Activated CD4-positive, alpha-beta T cell treated with anti-CD3 and anti-CD28 coated beads, Interleukin-2, amount 10 ng/mL, durations not matched to agents 24 days and 14 days (primary cell): ENCODE measurements at regions of chr7 and their contacts with region 1.

Region 1: DNA sequence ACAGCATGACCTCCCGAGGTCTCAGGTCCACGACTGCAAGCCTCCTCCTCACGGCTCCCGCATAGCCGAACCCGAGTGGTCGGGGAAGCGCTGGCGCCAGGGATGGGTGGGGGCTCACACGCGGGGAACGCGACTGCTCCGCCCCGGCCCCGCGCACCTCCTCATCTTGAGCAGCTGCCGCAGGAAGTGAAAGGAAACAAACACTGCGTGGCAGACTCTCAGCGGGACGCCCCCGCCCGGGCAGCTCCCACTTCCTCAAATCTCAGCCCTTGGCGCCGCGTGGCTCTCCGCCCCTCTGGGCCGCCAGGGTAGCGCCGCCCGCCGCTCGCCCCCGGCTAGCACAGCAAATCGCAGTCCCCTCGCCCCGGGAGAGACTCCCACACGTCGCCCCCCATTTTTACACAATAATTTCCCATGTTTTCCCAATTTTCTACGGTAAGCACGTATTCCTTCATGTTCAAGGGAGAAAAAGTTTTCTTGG is at the start of gene TMEM243:
- DNase-seq: peak; percentile 95
- H3K4me3 Mint-ChIP-seq: peak within 1 kb of the TSS; percentile 99
- H3K27ac Mint-ChIP-seq: peak within 1 kb of the TSS; percentile 99
- H3K4me1 Mint-ChIP-seq: peaks cover 33% of the 10 kb centered on the region
- H3K27me3 Mint-ChIP-seq: peaks cover 11% of the 10 kb centered on the region
- total RNA-seq, gene TMEM243: 46.1 and 48.0 TPM in 2 replicates

Region 2: GRCh38 chr7:85471740-85472139 is 1747.8 kb before region 1 on chr7:
- intact Hi-C with region 1: loop called (anchors 5 kb)
- DNase-seq: peak; percentile 58
- H3K4me3 Mint-ChIP-seq: peak overlapping the region; percentile 25
- H3K27ac Mint-ChIP-seq: peak overlapping the region; percentile 68
- H3K4me1 Mint-ChIP-seq: peaks cover 13% of the 10 kb centered on the region
- H3K27me3 Mint-ChIP-seq: no peaks in the 10 kb centered on the region

Region 3: GRCh38 chr7:87152107-87152844 is 67.3 kb before region 1 on chr7 and contains the start of gene DMTF1:
- intact Hi-C with region 1: loop called (anchors 1 kb)
- DNase-seq: peak; percentile 96
- H3K4me3 Mint-ChIP-seq: peak within 1 kb of the TSS; percentile 88
- H3K27ac Mint-ChIP-seq: peak within 1 kb of the TSS; percentile 95
- H3K4me1 Mint-ChIP-seq: peaks cover 27% of the 10 kb centered on the region
- H3K27me3 Mint-ChIP-seq: no peaks in the 10 kb centered on the region
- total RNA-seq, gene DMTF1: 95.7 and 102 TPM in 2 replicates

Region 4: DNA sequence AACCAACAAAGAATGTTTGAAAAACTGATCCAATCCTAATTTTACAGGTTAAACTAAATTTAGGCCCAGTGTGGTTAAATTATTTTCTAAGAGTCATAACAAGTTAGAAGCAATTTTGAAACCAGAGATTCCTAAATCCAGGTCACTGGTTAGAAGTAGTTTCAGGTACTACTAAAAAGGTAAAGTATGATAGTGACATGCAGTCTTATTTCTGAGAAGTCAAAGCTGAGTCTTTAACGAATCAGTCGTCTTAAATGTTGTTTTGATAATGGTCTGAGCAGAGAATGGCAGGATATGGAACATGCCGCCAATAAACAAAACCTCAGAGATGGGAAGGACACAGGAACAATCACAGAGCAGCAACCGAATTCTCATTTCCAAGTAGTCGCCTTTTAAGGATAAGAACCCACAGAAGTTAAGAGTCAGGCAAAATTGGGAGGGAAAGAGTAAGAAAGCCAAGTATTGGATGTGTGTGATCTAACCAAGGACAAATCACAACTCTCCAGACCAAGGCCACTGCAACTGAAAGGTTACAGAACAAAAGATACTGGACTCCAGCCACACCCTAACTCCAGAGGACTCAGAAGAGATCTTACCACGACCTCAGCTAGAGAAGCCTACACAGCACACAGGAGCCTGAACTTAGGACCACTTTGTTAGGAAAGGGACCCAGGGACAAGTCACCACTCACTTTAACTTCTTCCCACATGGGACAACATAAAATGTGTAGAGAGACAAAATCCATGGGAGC is 19.7 kb before region 1 on chr7:
- intact Hi-C with region 1: loop called (anchors 1 kb)
- DNase-seq: peak; percentile 52
- H3K4me3 Mint-ChIP-seq: no peak overlapping the region
- H3K27ac Mint-ChIP-seq: peak overlapping the region; percentile 29
- H3K4me1 Mint-ChIP-seq: peaks cover 20% of the 10 kb centered on the region
- H3K27me3 Mint-ChIP-seq: no peaks in the 10 kb centered on the region

Region 5: GRCh38 chr7:87231256-87231655 is 11.7 kb after region 1 on chr7:
- intact Hi-C with region 1: loop called (anchors 2 kb)
- DNase-seq: no peak
- H3K4me3 Mint-ChIP-seq: no peak overlapping the region
- H3K27ac Mint-ChIP-seq: no peak overlapping the region
- H3K4me1 Mint-ChIP-seq: peaks cover 5% of the 10 kb centered on the region
- H3K27me3 Mint-ChIP-seq: peaks cover 8% of the 10 kb centered on the region

Region 6: DNA sequence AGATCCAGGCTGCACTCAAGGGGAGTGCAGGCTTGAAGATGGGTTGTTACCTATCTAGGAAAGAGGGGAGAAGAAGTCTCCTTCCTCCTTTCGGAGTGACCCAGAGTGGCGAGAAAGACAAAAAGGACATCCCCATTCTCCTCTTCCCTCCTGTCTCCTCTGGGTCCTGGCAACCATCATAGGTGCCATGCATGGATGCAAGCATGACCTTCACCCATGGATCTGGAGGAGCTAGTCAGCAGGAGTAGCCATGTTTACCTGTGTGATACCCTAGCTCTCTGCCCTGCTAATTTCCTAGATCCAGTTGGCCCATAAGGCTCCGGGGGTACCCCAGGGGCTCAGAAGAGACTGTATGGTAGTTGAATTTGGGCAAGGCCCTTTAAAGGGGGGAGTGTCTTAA is 108.7 kb after region 1 on chr7:
- intact Hi-C with region 1: no loop called
- DNase-seq: no peak
- H3K4me3 Mint-ChIP-seq: no peak overlapping the region
- H3K27ac Mint-ChIP-seq: no peak overlapping the region
- H3K4me1 Mint-ChIP-seq: peaks cover 4% of the 10 kb centered on the region
- H3K27me3 Mint-ChIP-seq: no peaks in the 10 kb centered on the region

Region 7: DNA sequence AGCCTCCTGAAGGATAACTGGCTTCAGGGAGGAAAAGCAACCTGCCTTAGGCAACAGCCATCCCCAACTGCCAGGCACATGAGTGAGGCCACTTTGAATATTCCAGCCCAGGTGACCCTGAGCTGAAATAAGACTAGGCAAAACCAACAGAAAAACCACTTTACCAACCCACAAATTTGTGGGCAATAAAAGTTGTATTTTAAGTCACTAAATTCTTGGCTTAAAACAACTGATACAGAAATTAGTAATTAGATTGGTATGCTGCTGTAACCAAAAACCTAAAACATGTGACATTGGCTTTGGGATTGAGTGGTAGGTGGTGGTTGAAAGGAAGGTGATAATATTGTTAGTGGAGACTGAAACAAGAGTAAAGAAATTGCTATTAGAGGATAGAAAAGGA is 216.0 kb after region 1 on chr7:
- intact Hi-C with region 1: no loop called
- DNase-seq: no peak
- H3K4me3 Mint-ChIP-seq: no peak overlapping the region
- H3K27ac Mint-ChIP-seq: no peak overlapping the region
- H3K4me1 Mint-ChIP-seq: no peaks in the 10 kb centered on the region
- H3K27me3 Mint-ChIP-seq: peaks cover 2% of the 10 kb centered on the region

Region 8: DNA sequence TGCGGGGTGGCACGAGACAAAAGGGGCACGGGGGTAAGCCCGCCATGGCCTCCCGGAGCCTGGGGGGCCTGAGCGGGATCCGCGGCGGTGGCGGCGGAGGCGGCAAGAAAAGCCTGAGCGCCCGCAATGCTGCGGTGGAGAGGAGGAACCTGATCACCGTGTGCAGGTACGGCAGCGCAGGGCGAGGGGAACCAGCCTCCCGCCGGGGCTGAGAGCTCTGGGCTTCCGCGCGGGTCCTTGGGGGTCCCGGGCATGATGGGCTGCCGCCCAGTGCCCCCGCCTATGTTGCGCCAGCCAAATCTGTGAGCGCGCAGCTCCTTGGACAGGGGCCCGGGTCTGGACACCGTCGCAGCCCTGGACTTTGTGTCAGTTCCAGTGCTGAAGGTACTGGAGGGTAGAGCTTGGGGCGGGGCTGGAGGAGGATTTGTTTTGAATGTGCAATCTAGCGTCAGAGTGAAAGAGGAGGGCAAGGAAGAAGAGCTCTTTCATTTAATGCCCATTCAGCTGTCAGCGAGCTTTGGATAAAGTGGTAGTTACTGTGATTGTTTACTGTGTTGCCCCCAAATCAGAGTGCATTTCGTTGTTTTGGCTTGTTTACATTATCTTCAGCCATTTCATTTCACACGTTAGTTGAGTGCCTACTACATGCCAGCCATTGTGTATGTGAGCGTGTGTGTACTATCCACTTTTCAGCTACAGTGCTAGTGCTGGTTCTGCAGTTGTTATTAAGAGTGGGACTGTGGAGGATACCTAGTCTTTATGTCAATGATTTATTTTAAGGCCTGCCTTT is 409.4 kb after region 1 on chr7:
- intact Hi-C with region 1: loop called (anchors 10 kb)
- DNase-seq: peak; percentile 66
- H3K4me3 Mint-ChIP-seq: peak overlapping the region; percentile 88
- H3K27ac Mint-ChIP-seq: no peak overlapping the region
- H3K4me1 Mint-ChIP-seq: peaks cover 10% of the 10 kb centered on the region
- H3K27me3 Mint-ChIP-seq: peaks cover 26% of the 10 kb centered on the region